HCT116 (cell line): ENCODE measurements at regions of chr13 and their contacts with region 1.

Region 1: DNA sequence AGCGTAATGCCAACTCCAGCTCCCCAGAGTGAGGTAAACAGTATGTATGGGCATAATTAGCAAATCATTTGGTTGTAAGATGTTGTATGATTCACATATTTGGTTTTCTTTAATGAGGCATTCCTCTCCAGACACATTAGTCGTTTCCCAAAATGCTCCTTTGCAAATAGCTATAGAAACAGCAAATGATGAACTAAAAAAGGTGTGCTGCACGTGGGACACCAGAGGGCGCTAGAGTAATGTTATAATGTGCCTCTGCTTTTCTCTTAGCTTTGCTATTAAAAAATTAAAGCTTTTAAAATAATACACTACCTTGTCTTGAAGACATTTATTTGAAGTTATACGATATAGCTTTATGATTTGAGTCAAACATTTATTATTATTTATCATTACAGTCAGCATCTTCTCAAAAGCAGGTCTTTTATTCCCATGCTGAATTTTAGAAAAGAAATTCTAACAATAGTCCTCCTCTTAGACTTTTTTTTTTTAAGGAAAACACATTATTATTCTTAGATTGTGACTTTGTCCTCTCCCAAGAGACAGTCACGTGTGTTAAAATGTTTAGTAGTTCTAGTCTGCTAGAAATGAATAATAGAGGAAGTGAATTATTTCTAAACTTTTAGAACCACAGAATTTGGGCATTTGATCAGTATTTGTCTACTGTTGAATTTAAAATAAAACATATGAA is 121.6 kb upstream of the FRY start:
- DNase-seq: peak; percentile 41
- ATAC-seq: peak; percentile 75
- H3K4me3 ChIP-seq: no peak overlapping the region
- H3K27ac ChIP-seq: no peak overlapping the region
- H3K4me1 ChIP-seq: no peaks in the 10 kb centered on the region
- H3K27me3 ChIP-seq: peaks cover 16% of the 10 kb centered on the region
- CTCF ChIP-seq: peak; percentile 56 to 90 (median 80); a peak in 5 of 6 replicates
- POLR2A ChIP-seq: no peak
- RAD21 ChIP-seq: peak; percentile 78

Region 2: GRCh38 chr13:31538067-31539042 is 371.7 kb before region 1 on chr13:
- CTCF ChIA-PET with region 1: no interaction called
- POLR2A ChIA-PET with region 1: no interaction called
- RAD21 ChIA-PET with region 1: no interaction called
- intact Hi-C with region 1: no loop called
- DNase-seq: peak; percentile 8
- ATAC-seq: peak; percentile 78
- H3K4me3 ChIP-seq: no peak overlapping the region
- H3K27ac ChIP-seq: no peak overlapping the region
- H3K4me1 ChIP-seq: no peaks in the 10 kb centered on the region
- H3K27me3 ChIP-seq: peaks cover 36% of the 10 kb centered on the region
- CTCF ChIP-seq: peak; percentile 13 to 65 (median 63); a peak in 4 of 6 replicates
- POLR2A ChIP-seq: no peak
- RAD21 ChIP-seq: peak; percentile 22; the same call in 1 of the 2 replicates

Region 3: DNA sequence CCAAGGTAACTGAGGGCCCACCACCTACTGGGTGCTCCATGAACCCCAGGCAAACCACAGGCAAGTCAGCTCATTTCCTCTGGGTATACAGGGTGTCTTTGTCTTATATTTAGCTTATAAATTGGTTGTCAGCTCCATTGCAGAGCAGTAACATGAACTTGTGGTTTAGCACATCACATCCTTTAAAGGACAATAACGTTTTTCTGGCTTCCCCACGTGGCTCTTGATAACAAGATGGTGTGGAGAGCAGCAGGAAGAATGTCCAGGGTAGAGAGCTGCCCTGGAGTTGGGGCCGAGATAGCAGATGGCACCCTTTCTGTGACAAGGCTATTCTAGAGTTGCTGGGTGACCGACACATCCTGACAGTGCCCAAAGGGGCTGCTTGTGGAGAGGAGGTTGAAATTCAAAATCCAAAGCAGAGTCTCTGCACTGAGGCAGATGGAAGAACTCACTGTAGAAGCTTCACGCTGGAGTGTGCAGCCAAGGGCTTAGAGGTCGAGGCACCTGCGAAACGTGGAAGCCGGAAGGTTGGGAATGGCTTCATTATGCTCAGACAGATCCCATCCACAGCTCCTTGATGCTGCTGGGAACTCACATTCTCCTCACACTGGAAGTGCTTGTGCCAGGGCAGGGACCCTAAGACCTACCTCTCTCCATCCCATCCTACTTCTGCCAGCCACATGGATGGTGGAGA is 11.5 kb before region 1 on chr13:
- CTCF ChIA-PET with region 1: interaction called, 14 read pairs
- POLR2A ChIA-PET with region 1: no interaction called
- RAD21 ChIA-PET with region 1: no interaction called
- intact Hi-C with region 1: no loop called
- DNase-seq: no peak
- ATAC-seq: no peak
- H3K4me3 ChIP-seq: no peak overlapping the region
- H3K27ac ChIP-seq: no peak overlapping the region
- H3K4me1 ChIP-seq: no peaks in the 10 kb centered on the region
- H3K27me3 ChIP-seq: no peaks in the 10 kb centered on the region
- CTCF ChIP-seq: no peak
- POLR2A ChIP-seq: no peak
- RAD21 ChIP-seq: no peak

Region 4: GRCh38 chr13:31930901-31931522 is 21.0 kb after region 1 on chr13:
- CTCF ChIA-PET with region 1: interaction called, 14 read pairs
- POLR2A ChIA-PET with region 1: no interaction called
- RAD21 ChIA-PET with region 1: no interaction called
- intact Hi-C with region 1: no loop called
- DNase-seq: no peak
- ATAC-seq: no peak
- H3K4me3 ChIP-seq: no peak overlapping the region
- H3K27ac ChIP-seq: no peak overlapping the region
- H3K4me1 ChIP-seq: peaks cover 0 to 7% of the 10 kb centered on the region in 2 experiments; a peak in 2 of 4 replicates
- H3K27me3 ChIP-seq: no peaks in the 10 kb centered on the region
- CTCF ChIP-seq: no peak
- POLR2A ChIP-seq: no peak
- RAD21 ChIP-seq: no peak

Region 5: DNA sequence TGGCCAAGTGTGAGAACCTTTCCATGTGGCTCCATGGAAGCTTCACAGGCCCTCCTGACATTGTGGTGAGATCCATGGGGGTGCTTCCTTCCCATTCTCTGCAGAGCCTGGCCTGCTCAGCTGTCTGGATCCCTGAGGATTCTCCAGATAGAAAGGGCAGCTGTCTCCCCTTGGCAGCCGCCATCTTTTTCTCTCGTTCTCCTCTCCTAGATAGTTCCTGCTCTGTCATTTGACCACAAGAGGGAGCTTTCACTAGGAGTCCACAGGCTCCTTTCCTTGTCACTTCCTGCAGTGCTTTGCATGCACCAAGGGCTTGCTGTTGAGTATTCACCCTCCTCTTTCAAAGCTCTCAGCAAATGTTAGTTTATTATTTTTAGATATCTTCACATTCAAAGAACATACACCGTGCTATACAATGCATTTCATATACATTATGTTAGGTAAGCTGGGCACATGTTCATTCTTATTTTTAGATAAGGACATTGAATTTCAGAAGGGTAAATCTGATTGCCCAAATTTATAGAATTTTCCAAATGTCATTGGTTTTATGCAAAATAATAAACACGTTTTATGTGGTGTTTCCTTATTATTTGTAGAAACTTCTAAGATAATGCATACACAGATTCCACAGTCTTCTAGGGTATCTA is 254.7 kb after region 1 on chr13:
- CTCF ChIA-PET with region 1: interaction called, 28 read pairs
- POLR2A ChIA-PET with region 1: no interaction called
- RAD21 ChIA-PET with region 1: interaction called, 4 read pairs
- intact Hi-C with region 1: no loop called
- DNase-seq: peak; percentile 75
- ATAC-seq: peak; percentile 100
- H3K4me3 ChIP-seq: no peak overlapping the region
- H3K27ac ChIP-seq: no peak overlapping the region
- H3K4me1 ChIP-seq: peaks cover 0 to 4% of the 10 kb centered on the region in 2 experiments; a peak in 1 of 4 replicates
- H3K27me3 ChIP-seq: no peaks in the 10 kb centered on the region
- CTCF ChIP-seq: peak; percentile 47 to 96 (median 84)
- POLR2A ChIP-seq: no peak
- RAD21 ChIP-seq: peak; percentile 46

Region 6: DNA sequence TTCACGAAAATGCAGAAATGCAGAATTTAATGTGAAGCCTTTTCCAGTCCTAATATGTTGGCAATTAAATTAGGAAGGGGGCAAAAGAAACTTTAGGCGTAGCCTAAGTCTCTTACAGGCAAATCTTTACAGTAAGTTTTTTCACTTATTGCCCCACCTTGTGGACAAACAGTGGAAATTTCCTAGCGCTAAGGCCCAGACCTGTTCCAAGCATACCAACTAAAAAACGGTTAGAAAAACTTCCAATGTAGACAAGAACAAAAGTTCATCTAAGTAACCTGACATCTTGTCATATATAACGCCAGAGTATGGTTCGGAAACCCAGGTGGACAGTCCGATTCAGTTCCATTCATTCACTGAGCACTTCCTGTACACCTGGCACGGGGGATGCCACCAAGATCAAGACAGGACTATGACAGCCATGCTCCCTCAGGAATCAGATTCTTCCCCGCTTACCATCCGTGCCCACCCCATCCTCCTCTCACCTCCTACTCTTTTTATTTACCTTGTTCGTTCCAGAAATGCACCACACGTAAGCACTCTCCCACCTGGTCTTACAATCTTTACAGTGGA is 400.2 kb after region 1 on chr13:
- CTCF ChIA-PET with region 1: interaction called, 13 read pairs
- POLR2A ChIA-PET with region 1: no interaction called
- RAD21 ChIA-PET with region 1: interaction called in 1 of 2 experiments, 3 read pairs
- intact Hi-C with region 1: loop called (anchors 1 kb)
- DNase-seq: peak; percentile 54
- ATAC-seq: peak; percentile 88
- H3K4me3 ChIP-seq: no peak overlapping the region
- H3K27ac ChIP-seq: no peak overlapping the region
- H3K4me1 ChIP-seq: peaks cover 4 to 12% of the 10 kb centered on the region in 2 experiments; a peak in 3 of 4 replicates
- H3K27me3 ChIP-seq: no peaks in the 10 kb centered on the region
- CTCF ChIP-seq: peak; percentile 56 to 75 (median 63)
- POLR2A ChIP-seq: no peak
- RAD21 ChIP-seq: peak; percentile 61

Region 7: DNA sequence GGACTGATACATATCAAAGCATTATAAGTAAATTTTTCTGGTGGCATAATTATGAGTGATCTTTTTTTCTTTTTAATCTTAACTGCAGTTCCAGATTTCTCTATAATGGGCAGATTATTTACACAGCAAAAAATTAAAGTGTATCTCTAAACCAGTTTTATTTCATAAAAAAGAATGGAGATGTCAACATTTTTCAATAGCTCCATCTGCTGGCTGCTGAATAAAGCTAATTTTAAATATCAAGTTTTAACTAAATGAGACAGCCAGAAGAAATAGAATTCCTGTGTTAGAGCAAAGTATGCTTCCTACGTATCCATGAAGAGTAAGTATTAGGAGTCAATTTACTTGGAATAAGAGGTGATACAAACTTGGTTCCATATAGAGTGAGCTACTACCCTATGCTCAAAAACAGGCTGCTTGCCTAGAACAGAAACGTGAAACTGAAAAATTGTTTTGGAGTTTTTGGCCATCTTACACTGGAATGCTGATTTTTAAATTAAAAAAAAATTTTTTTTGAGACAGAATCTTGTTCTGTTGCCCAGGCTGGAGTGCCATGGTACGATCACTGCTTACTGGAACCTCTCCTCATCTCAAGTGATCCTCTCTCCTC is 671.3 kb after region 1 on chr13:
- CTCF ChIA-PET with region 1: interaction called, 81 read pairs
- POLR2A ChIA-PET with region 1: interaction called, 3 read pairs
- RAD21 ChIA-PET with region 1: interaction called in 1 of 2 experiments, 6 read pairs
- intact Hi-C with region 1: loop called (anchors 1 kb)
- DNase-seq: peak; percentile 10
- ATAC-seq: no peak
- H3K4me3 ChIP-seq: no peak overlapping the region
- H3K27ac ChIP-seq: no peak overlapping the region
- H3K4me1 ChIP-seq: peaks cover 4 to 8% of the 10 kb centered on the region in 2 experiments
- H3K27me3 ChIP-seq: no peaks in the 10 kb centered on the region
- CTCF ChIP-seq: peak; percentile 44 to 57 (median 55); a peak in 5 of 6 replicates
- POLR2A ChIP-seq: no peak
- RAD21 ChIP-seq: peak; percentile 58